ENCODE measurements at regions of chr7 and their contacts with region 1.

Region 1: DNA sequence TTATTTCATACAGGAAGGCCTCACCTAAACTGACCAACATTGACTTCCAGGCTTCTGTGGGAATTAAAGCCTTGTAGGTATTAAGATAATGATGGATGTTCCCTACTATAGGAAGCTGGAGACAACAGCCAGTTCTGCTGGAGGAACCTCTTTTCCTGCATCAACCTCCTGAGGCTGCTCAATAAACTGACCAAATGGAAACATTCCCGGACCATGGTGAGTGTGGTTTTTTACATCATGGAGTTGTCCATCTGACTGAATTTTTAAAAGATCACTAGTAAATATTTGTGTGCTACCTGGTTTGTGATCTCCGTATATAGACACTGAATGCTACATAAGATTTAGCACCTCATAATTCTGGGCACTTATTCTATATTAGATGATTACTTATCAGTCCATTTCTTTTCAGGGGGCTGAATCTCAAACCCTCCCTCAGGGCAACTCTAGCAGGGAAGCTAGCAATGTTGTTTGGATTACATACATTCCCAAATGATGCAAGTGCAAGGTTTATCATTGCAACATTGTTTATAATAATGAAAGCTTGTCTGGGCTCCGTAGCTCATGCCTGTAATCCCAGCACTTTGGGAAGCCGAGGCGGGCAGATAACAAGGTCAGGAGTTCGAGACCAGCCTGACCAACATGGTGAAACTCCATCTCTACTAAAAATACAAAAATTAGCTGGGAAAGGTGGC is 21.5 kb upstream of the SMKR1 start:
- DNase-seq: no peak
- ATAC-seq: no peak
- H3K4me3 ChIP-seq: no peak overlapping the region
- H3K27ac ChIP-seq: no peak overlapping the region
- H3K4me1 ChIP-seq: no peaks in the 10 kb centered on the region
- H3K27me3 ChIP-seq: no peaks in the 10 kb centered on the region
- CTCF ChIP-seq: no peak

Region 2: DNA sequence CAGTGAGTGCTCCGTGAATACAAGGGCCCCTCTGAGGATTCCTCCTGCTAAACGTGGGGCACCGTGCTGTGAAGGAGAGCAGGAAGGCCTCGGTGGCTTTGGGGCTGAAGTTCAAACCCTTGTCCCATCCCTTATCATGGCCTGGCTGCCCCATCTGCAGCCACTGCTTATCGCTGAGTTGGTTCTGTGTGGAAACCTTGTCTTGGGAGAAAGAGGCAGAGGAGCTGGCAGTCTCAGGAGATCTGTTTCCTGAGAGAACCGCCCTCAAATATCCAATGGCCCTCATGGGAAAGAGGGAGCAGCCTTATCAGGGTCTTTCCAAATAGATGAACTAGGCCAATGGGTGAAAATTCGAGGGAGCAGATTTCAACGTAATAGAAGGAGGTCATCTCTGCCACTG is 78.7 kb after region 1 on chr7:
- CTCF ChIA-PET with region 1: interaction called, 10 read pairs
- POLR2A ChIA-PET with region 1: no interaction called
- in situ Hi-C with region 1: no loop called
- intact Hi-C with region 1: no loop called
- DNase-seq: no peak
- ATAC-seq: no peak
- H3K4me3 ChIP-seq: no peak overlapping the region
- H3K27ac ChIP-seq: no peak overlapping the region
- H3K4me1 ChIP-seq: no peaks in the 10 kb centered on the region
- H3K27me3 ChIP-seq: no peaks in the 10 kb centered on the region; the same call in 1 of the 2 replicates
- CTCF ChIP-seq: no peak

Measured in Panc1 (cell line).